PC-3 (cell line): ENCODE measurements at regions of chr5 and their contacts with region 1.

Region 1: DNA sequence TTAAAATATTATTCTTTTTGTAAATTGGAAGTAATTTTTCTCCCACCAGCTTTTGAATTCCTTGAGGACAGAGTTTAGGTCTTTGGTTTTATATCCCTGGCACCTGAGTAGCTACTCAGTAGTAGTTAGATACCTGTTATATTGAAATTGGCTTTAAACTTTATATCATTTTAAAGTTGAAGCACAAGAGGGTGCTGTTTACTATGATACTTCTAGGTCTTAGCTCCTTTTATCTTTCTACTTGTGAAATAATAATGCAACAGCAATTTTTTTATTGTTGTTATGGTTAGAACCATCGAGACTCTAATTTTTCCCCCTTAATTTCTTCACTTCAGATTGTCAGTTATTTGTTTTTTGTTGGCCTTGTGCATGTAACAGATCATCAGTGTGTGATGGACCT is 46.3 kb downstream of the AP3S1 start:
- DNase-seq: peak; percentile 54
- ATAC-seq: peak; percentile 60
- H3K4me3 ChIP-seq: no peak overlapping the region
- H3K27ac ChIP-seq: no peak overlapping the region
- H3K4me1 ChIP-seq: no peaks in the 10 kb centered on the region
- H3K27me3 ChIP-seq: no peaks in the 10 kb centered on the region
- CTCF ChIP-seq: peak; percentile 64

Region 2: GRCh38 chr5:115634343-115635132 is 253.5 kb before region 1 on chr5:
- CTCF ChIA-PET with region 1: no interaction called
- POLR2A ChIA-PET with region 1: no interaction called
- intact Hi-C with region 1: loop called (anchors 2 kb)
- DNase-seq: peak; percentile 85
- ATAC-seq: peak; percentile 96
- H3K4me3 ChIP-seq: peak overlapping the region; percentile 39
- H3K27ac ChIP-seq: no peak overlapping the region
- H3K4me1 ChIP-seq: no peaks in the 10 kb centered on the region
- H3K27me3 ChIP-seq: no peaks in the 10 kb centered on the region
- CTCF ChIP-seq: peak; percentile 80

Region 3: DNA sequence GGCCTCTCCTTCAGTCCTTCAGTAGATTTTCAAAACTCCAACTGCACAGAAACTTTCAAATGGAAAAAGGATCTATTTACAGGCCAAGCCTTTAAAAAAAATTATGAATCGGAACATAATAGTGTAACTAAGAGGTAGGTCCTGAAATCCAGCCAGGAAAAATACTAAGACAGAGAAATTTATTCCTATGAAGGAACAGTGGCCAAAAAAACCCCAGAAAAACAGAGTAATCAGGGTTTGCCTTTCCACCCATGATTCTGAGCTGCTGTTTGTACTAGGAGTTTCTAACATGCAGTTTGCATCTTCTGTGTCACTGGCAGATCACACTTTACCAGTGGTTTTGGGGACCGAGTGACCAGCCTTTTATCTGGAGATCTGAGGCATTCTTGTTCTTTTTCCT is 169.1 kb before region 1 on chr5:
- CTCF ChIA-PET with region 1: no interaction called
- POLR2A ChIA-PET with region 1: no interaction called
- intact Hi-C with region 1: no loop called
- DNase-seq: no peak
- ATAC-seq: no peak
- H3K4me3 ChIP-seq: no peak overlapping the region
- H3K27ac ChIP-seq: no peak overlapping the region
- H3K4me1 ChIP-seq: no peaks in the 10 kb centered on the region
- H3K27me3 ChIP-seq: peaks cover 62% of the 10 kb centered on the region
- CTCF ChIP-seq: no peak

Region 4: GRCh38 chr5:115940126-115940810 is 52.2 kb after region 1 on chr5:
- CTCF ChIA-PET with region 1: no interaction called
- POLR2A ChIA-PET with region 1: no interaction called
- intact Hi-C with region 1: loop called (anchors 2 kb)
- DNase-seq: no peak
- ATAC-seq: no peak
- H3K4me3 ChIP-seq: no peak overlapping the region
- H3K27ac ChIP-seq: peak overlapping the region; percentile 85; the same call in 1 of the 2 replicates
- H3K4me1 ChIP-seq: peaks cover 5% of the 10 kb centered on the region; the same call in 1 of the 2 replicates
- H3K27me3 ChIP-seq: no peaks in the 10 kb centered on the region
- CTCF ChIP-seq: no peak

Region 5: GRCh38 chr5:116032094-116032517 is 144.1 kb after region 1 on chr5 and contains the start of gene ARL14EPL:
- CTCF ChIA-PET with region 1: interaction called, 8 read pairs
- POLR2A ChIA-PET with region 1: interaction called, 5 read pairs
- intact Hi-C with region 1: loop called (anchors 1 kb)
- DNase-seq: peak; percentile 87
- ATAC-seq: peak; percentile 100
- H3K4me3 ChIP-seq: no peak within 1 kb of the TSS
- H3K27ac ChIP-seq: peak within 1 kb of the TSS; percentile 43
- H3K4me1 ChIP-seq: peaks cover 30% of the 10 kb centered on the region
- H3K27me3 ChIP-seq: no peaks in the 10 kb centered on the region
- CTCF ChIP-seq: peak; percentile 46; the same call in 1 of the 2 replicates
- total RNA-seq, gene ARL14EPL: not detected in 2 replicates

Region 6: GRCh38 chr5:116068028-116068632 is 180.1 kb after region 1 on chr5:
- CTCF ChIA-PET with region 1: interaction called, 3 read pairs
- POLR2A ChIA-PET with region 1: no interaction called
- intact Hi-C with region 1: loop called (anchors 1 kb)
- DNase-seq: peak; percentile 61
- ATAC-seq: peak; percentile 45; the same call in 1 of the 2 replicates
- H3K4me3 ChIP-seq: no peak overlapping the region
- H3K27ac ChIP-seq: no peak overlapping the region
- H3K4me1 ChIP-seq: no peaks in the 10 kb centered on the region
- H3K27me3 ChIP-seq: no peaks in the 10 kb centered on the region
- CTCF ChIP-seq: peak; percentile 84